Heart left ventricle (tissue), 16 donors: ENCODE measurements at regions of chr18 and their contacts with region 1.

Region 1: DNA sequence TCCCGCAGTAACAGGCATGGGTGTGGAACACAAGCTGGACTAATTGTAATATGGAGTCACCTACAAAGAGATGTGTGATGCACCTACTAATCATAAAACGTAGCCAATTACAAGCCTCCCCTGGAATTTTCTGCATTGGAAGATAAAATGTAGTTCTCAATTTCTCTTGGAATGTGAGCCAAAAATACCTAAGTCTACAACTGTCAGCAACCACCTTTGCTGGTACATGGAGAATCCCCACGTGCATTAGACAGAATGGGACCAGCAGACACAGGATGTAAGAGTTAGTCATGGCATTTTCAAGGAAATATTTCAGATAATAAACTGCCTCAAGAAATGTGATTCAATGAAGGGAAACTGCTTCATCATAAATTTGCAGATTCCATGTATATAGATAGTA is 85.6 kb upstream of the DCC start:
- DNase-seq: no peak
- ATAC-seq: no peak
- H3K4me3 ChIP-seq: no peak overlapping the region
- H3K27ac ChIP-seq: no peak overlapping the region
- H3K4me1 ChIP-seq: no peaks in the 10 kb centered on the region
- H3K27me3 ChIP-seq: no peaks in the 10 kb centered on the region
- CTCF ChIP-seq: no peak
- POLR2A ChIP-seq: no peak

Region 2: GRCh38 chr18:52275817-52276216 is 21.4 kb after region 1 on chr18:
- intact Hi-C with region 1: loop called in 1 of 10 experiments (anchors 1 kb)
- DNase-seq: no peak
- ATAC-seq: no peak
- H3K4me3 ChIP-seq: no peak overlapping the region
- H3K27ac ChIP-seq: no peak overlapping the region
- H3K4me1 ChIP-seq: no peaks in the 10 kb centered on the region
- H3K27me3 ChIP-seq: no peaks in the 10 kb centered on the region
- CTCF ChIP-seq: no peak
- POLR2A ChIP-seq: no peak